ENCODE measurements at regions of chr13 and their contacts with region 1.

Region 1: DNA sequence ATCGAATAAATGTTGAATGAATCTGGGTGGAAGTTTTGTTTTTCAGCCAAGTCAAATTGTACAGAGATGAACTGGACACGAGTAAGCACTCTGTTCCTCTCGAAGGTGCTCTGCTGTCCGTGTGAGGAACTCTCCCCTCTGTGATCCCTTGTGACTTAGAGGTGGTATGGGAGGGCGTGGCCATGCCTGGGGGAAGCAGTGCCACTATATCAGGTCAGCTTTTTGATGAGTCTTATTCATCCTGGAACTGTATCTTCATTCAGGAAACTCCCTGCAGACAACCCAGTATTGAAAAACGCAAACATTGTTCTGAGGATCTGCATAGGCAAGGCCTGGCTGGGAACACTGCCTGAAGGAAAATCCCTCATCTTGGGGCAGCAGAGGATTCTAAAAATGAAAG is 45.7 kb upstream of the FLT1 start:
- DNase-seq: peak; percentile 56
- ATAC-seq: peak; percentile 62
- H3K4me3 Mint-ChIP-seq: peak overlapping the region; percentile 6
- H3K27ac Mint-ChIP-seq: peak overlapping the region; percentile 83
- H3K4me1 Mint-ChIP-seq: peaks cover 41% of the 10 kb centered on the region
- H3K27me3 Mint-ChIP-seq: peaks cover 25% of the 10 kb centered on the region

Region 2: DNA sequence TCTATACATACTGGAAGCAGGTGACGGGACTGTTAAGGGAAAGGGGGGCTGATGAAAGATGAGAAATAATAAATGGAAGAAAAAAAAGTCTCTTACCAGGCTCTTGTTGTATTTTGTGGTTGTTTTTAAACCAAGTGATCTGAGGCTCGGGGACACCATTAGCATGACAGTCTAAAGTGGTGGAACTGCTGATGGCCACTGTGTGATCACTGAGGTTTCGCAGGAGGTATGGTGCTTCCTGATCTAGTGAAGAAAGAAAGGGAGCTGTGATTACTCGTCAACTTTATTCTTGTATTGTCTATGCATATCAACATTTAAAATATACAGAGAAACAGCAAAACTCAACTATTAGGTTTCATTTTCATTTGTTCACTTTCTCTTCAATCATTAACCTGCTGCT is 155.8 kb before region 1 on chr13:
- CTCF ChIA-PET with region 1: no interaction called
- POLR2A ChIA-PET with region 1: no interaction called
- intact Hi-C with region 1: no loop called
- DNase-seq: no peak
- ATAC-seq: no peak
- H3K4me3 Mint-ChIP-seq: no peak overlapping the region
- H3K27ac Mint-ChIP-seq: no peak overlapping the region
- H3K4me1 Mint-ChIP-seq: no peaks in the 10 kb centered on the region
- H3K27me3 Mint-ChIP-seq: peaks cover 2% of the 10 kb centered on the region

Region 3: GRCh38 chr13:28527411-28528028 is 13.1 kb before region 1 on chr13:
- CTCF ChIA-PET with region 1: interaction called, 3 read pairs
- POLR2A ChIA-PET with region 1: no interaction called
- intact Hi-C with region 1: loop called in 1 of 2 experiments (anchors 1 kb)
- DNase-seq: no peak
- ATAC-seq: no peak
- H3K4me3 Mint-ChIP-seq: no peak overlapping the region
- H3K27ac Mint-ChIP-seq: no peak overlapping the region
- H3K4me1 Mint-ChIP-seq: peaks cover 25% of the 10 kb centered on the region
- H3K27me3 Mint-ChIP-seq: peaks cover 19% of the 10 kb centered on the region

Region 4: GRCh38 chr13:28574617-28575142 is 34.1 kb after region 1 on chr13:
- CTCF ChIA-PET with region 1: no interaction called
- POLR2A ChIA-PET with region 1: no interaction called
- intact Hi-C with region 1: loop called in 1 of 2 experiments (anchors 1 kb)
- DNase-seq: peak; percentile 69
- ATAC-seq: peak; percentile 98
- H3K4me3 Mint-ChIP-seq: no peak overlapping the region
- H3K27ac Mint-ChIP-seq: peak overlapping the region; percentile 90
- H3K4me1 Mint-ChIP-seq: peaks cover 15% of the 10 kb centered on the region
- H3K27me3 Mint-ChIP-seq: peaks cover 10% of the 10 kb centered on the region

Region 5: DNA sequence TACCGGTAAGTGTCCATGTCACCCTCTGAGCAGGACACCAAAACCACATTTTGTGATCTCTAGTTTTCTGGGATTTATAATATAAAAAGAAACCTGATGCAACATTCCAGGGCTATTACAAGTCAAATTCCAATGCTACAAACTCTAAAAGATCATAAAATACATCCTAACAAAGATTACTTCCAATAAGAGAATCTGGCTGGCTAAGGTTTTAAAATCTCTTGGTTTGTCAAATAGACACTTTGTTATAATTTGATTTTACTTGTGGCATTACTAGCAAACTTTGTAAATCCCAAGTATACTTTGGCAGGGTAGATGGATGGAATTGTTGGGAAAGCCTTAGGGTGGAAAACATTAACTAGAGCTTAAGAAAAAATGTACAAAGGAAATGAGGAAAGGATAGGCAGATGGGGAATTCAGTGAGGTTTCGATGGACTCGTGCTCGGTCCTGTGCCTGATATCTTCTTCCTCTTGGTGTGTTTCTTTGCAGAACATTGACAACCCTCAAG is 44.3 kb after region 1 on chr13:
- CTCF ChIA-PET with region 1: no interaction called
- POLR2A ChIA-PET with region 1: no interaction called
- intact Hi-C with region 1: no loop called
- DNase-seq: no peak
- ATAC-seq: no peak
- H3K4me3 Mint-ChIP-seq: no peak overlapping the region
- H3K27ac Mint-ChIP-seq: no peak overlapping the region
- H3K4me1 Mint-ChIP-seq: peaks cover 20% of the 10 kb centered on the region
- H3K27me3 Mint-ChIP-seq: peaks cover 2% of the 10 kb centered on the region

Region 6: GRCh38 chr13:28611654-28612131 is 71.1 kb after region 1 on chr13:
- CTCF ChIA-PET with region 1: no interaction called
- POLR2A ChIA-PET with region 1: no interaction called
- intact Hi-C with region 1: loop called in 1 of 2 experiments (anchors 2 kb)
- DNase-seq: peak; percentile 24
- ATAC-seq: peak; percentile 69
- H3K4me3 Mint-ChIP-seq: no peak overlapping the region
- H3K27ac Mint-ChIP-seq: peak overlapping the region; percentile 82
- H3K4me1 Mint-ChIP-seq: peaks cover 35% of the 10 kb centered on the region
- H3K27me3 Mint-ChIP-seq: peaks cover 1% of the 10 kb centered on the region

Region 7: DNA sequence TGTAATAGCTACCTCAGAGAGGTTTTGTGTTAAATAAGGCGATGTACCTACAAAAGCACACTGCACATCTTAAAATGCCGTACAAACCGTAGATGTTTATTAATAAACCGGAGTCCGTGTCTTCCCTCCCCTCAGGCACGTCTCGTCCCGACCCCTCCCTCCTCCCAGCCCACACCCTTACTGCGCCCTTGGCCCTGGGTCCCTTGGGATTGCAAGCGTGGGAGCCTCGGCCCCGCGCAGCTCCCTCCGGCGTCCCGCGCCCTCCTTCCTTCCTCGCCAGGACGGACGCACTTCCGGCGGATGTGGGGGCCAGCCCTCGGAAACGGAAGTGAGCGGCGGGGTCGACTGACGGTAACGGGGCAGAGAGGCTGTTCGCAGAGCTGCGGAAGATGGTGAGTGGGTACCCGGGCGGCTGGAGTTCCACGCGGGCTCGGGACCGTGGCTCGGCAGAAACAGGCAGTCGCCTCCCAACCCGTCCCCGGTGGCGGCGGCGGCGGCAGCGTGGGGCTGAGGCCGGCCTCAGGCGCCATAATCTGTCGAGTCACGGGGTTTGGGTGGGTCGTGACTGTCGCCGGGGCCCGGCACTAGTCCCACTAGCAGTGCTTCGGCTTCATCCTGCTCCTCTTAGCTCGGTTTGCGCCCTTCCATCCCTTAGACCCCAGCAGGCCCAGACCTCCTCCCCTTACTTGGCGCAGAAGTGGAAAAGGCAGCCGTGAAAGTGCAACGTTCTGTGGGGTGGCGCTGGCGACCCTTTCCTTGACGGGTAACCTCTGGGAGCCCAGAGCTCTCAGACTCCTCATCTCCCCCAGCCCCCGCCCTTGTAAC is 118.4 kb after region 1 on chr13 and contains the start of gene POMP:
- CTCF ChIA-PET with region 1: no interaction called
- POLR2A ChIA-PET with region 1: no interaction called
- intact Hi-C with region 1: no loop called
- DNase-seq: peak; percentile 95
- ATAC-seq: peak; percentile 88
- H3K4me3 Mint-ChIP-seq: peak within 1 kb of the TSS; percentile 99
- H3K27ac Mint-ChIP-seq: peak within 1 kb of the TSS; percentile 98
- H3K4me1 Mint-ChIP-seq: peaks cover 59% of the 10 kb centered on the region
- H3K27me3 Mint-ChIP-seq: no peaks in the 10 kb centered on the region
- total RNA-seq, gene POMP: 107 to 132 TPM

Region 8: GRCh38 chr13:29227576-29227975 is 687.0 kb after region 1 on chr13:
- CTCF ChIA-PET with region 1: no interaction called
- POLR2A ChIA-PET with region 1: no interaction called
- intact Hi-C with region 1: no loop called
- DNase-seq: no peak
- ATAC-seq: no peak
- H3K4me3 Mint-ChIP-seq: no peak overlapping the region
- H3K27ac Mint-ChIP-seq: no peak overlapping the region
- H3K4me1 Mint-ChIP-seq: no peaks in the 10 kb centered on the region
- H3K27me3 Mint-ChIP-seq: peaks cover 2% of the 10 kb centered on the region